GM12878 (cell line): ENCODE measurements at regions of chr16 and their contacts with region 1.

Region 1: GRCh38 chr16:52383640-52384292 is 163.2 kb downstream of the TOX3 start:
- DNase-seq: no peak
- ATAC-seq: no peak
- H3K4me3 ChIP-seq: no peak overlapping the region
- H3K27ac ChIP-seq: no peak overlapping the region
- H3K4me1 ChIP-seq: no peaks in the 10 kb centered on the region
- H3K27me3 ChIP-seq: no peaks in the 10 kb centered on the region
- CTCF ChIP-seq: no peak
- EP300 ChIP-seq: no peak
- POLR2A ChIP-seq: no peak
- RAD21 ChIP-seq: no peak

Region 2: GRCh38 chr16:52203096-52203495 is 180.7 kb before region 1 on chr16:
- CTCF ChIA-PET with region 1: no interaction called
- POLR2A ChIA-PET with region 1: no interaction called
- RAD21 ChIA-PET with region 1: no interaction called
- SMC1A ChIA-PET with region 1: no interaction called
- in situ Hi-C with region 1: no loop called
- intact Hi-C with region 1: loop called (anchors 10 kb)
- DNase-seq: no peak
- ATAC-seq: no peak
- H3K4me3 ChIP-seq: no peak overlapping the region
- H3K27ac ChIP-seq: no peak overlapping the region
- H3K4me1 ChIP-seq: no peaks in the 10 kb centered on the region
- H3K27me3 ChIP-seq: no peaks in the 10 kb centered on the region
- CTCF ChIP-seq: no peak
- EP300 ChIP-seq: no peak
- POLR2A ChIP-seq: no peak
- RAD21 ChIP-seq: no peak

Region 3: DNA sequence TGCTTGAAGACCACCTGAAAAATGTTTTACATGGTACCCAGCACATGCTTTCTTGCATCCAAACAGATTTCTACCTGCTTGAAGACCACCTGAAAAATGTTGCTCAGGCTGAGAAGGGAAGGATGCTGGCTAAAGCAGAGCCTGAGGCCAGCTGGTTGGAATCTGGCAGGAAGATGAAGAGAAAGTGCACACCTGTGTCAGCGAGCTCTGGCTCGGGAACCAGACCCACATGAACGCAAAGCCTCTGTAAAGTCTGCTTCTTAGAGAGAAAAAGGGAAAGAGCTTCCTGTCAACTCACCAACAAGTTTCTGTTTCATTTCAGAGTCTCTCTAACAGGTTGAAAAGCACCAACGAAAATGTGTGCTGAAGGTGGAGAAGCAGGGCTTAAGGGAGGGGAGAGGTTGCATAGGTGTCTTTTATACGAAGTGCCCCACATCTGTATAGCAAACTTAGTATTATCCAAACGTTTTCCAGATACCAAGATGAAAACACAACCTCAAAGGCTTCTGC is 62.8 kb before region 1 on chr16:
- CTCF ChIA-PET with region 1: no interaction called
- POLR2A ChIA-PET with region 1: no interaction called
- RAD21 ChIA-PET with region 1: no interaction called
- SMC1A ChIA-PET with region 1: no interaction called
- in situ Hi-C with region 1: no loop called
- intact Hi-C with region 1: loop called (anchors 10 kb)
- DNase-seq: no peak
- ATAC-seq: no peak
- H3K4me3 ChIP-seq: no peak overlapping the region
- H3K27ac ChIP-seq: no peak overlapping the region
- H3K4me1 ChIP-seq: no peaks in the 10 kb centered on the region
- H3K27me3 ChIP-seq: no peaks in the 10 kb centered on the region
- CTCF ChIP-seq: no peak
- EP300 ChIP-seq: no peak
- POLR2A ChIP-seq: no peak
- RAD21 ChIP-seq: no peak

Region 4: DNA sequence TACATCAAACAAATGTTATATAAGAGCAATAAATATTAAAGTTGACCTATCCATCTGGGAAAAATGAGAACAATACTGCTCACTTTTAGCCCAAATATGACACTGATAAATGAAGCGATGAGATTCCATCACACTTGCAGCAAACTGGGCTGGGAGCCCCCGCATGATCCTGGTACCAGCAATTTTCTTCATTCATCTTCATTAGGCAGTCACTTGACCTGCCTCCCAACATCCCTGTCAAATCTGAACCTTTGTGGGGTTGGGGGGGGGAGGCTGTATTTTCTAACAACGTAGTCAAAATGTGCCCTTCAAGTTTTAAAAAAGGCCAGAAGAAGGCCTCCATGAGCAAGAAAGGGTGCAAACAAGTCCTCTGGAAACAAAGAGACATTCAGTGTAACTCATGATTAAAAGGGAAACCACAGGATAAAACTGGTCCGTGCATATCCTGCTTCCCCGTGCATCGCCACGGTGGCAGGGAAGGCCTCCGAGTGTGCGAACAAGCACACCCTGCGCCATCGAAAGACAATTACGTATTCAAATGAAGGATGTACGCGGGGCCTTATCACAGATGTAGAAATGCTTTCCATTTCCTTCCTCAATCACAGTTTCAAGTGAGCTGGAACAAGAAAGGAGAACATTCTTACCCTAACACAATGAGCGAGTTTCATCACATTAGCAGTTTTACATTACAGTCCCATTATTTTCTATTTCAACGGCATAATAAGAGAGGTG is 114.7 kb after region 1 on chr16:
- CTCF ChIA-PET with region 1: no interaction called
- POLR2A ChIA-PET with region 1: no interaction called
- RAD21 ChIA-PET with region 1: no interaction called
- SMC1A ChIA-PET with region 1: no interaction called
- in situ Hi-C with region 1: no loop called
- intact Hi-C with region 1: no loop called
- DNase-seq: no peak
- ATAC-seq: no peak
- H3K4me3 ChIP-seq: no peak overlapping the region
- H3K27ac ChIP-seq: no peak overlapping the region
- H3K4me1 ChIP-seq: no peaks in the 10 kb centered on the region
- H3K27me3 ChIP-seq: no peaks in the 10 kb centered on the region
- CTCF ChIP-seq: no peak
- EP300 ChIP-seq: no peak
- POLR2A ChIP-seq: no peak
- RAD21 ChIP-seq: no peak